PC-9 (cell line): ENCODE measurements at regions of chr22 and their contacts with region 1.

Region 1: GRCh38 chr22:39170825-39171622 is 18.5 kb upstream of the CBX7 start:
- DNase-seq: peak; percentile 53 to 91
- H3K4me3 ChIP-seq: no peak overlapping the region
- H3K27ac ChIP-seq: no peak overlapping the region
- H3K4me1 ChIP-seq: peaks cover 50% of the 10 kb centered on the region
- H3K27me3 ChIP-seq: no peaks in the 10 kb centered on the region
- CTCF ChIP-seq: peak; percentile 100

Region 2: DNA sequence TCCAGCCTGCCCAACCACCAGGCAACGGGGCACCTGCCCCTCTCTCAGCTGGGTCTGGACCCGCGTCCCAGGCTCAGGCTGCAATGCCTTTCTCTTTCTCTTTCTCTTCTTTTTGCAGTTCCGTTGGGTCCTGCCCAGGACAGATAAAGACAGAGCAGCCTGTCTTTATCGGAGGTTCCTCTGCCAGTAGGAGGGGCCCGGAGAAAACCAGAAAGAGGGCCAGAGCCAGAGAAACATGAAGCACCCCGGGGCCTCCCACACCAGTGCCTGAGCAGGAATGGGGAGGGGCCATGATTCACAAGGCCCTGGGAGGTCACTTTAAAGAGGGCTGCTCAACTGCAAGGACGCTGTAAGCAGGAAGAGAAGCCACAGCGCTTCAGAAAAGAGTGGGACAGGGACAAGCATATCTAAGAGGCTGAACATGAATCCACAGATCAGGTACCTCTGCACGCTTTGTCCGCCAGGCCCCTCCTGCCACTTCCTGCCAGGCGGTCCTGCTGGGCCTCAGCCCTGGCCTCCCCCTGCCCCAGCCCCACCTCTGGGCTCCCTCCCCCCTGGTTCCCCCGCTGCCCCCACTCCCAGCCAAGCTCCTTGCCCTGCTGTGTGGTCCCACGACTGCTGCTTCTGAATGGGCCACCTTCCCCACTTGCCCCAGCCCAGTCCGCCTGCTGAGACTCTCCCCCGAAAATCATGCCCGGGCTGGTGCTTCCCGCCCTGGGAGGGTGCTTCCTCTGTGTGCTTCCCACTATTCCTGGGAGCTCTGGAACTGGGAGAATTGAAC is 156.9 kb before region 1 on chr22 and contains the start of gene APOBEC3C:
- CTCF ChIA-PET with region 1: no interaction called
- POLR2A ChIA-PET with region 1: no interaction called
- intact Hi-C with region 1: no loop called
- DNase-seq: peak; percentile 89 to 92
- H3K4me3 ChIP-seq: peak within 1 kb of the TSS; percentile 77
- H3K27ac ChIP-seq: peak within 1 kb of the TSS; percentile 65
- H3K4me1 ChIP-seq: peaks cover 27% of the 10 kb centered on the region
- H3K27me3 ChIP-seq: no peaks in the 10 kb centered on the region
- CTCF ChIP-seq: peak; percentile 28; the same call in 1 of the 2 replicates
- total RNA-seq, gene APOBEC3C: 64.6 and 66.5 TPM in 2 replicates

Region 3: DNA sequence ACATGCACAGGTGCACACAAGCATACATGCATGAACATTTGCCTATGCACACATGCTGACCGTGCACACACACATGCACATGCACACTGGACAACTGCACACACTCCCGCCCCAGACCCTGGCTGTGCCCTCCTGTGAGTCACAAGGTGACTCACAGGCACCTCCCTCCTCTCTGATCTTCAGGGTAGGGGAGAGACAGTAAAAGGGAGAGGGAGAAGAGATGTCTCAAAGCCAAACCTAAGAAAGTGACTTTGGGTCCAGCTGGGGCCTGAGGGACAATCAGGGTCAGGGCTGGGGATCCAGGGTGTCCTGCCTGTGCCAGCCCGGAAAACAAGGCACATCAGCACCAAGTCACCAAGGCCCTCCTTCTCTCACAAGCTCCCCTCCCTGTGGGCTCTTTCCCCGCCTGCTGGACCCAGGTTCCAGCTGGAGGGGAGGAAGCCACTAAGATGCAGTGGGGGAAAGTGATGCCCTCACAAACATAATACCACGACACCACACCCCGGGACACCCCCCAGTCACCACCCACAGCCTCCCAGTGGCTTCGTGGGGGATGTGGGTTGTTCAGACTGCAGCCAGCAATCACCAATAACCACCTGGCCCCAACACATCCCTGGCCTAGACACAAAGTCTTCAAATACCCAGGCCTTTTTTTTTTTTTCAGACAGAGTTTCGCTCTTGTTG is 34.5 kb after region 1 on chr22:
- CTCF ChIA-PET with region 1: interaction called, 7 read pairs
- POLR2A ChIA-PET with region 1: interaction called, 6 read pairs
- intact Hi-C with region 1: loop called (anchors 1 kb)
- DNase-seq: peak; percentile 71 to 86
- H3K4me3 ChIP-seq: no peak overlapping the region
- H3K27ac ChIP-seq: peak overlapping the region; percentile 54
- H3K4me1 ChIP-seq: peaks cover 42% of the 10 kb centered on the region
- H3K27me3 ChIP-seq: no peaks in the 10 kb centered on the region
- CTCF ChIP-seq: no peak

Region 4: GRCh38 chr22:39236321-39237317 is 65.6 kb after region 1 on chr22:
- CTCF ChIA-PET with region 1: no interaction called
- POLR2A ChIA-PET with region 1: interaction called, 3 read pairs
- intact Hi-C with region 1: loop called (anchors 1 kb)
- DNase-seq: no peak
- H3K4me3 ChIP-seq: no peak overlapping the region
- H3K27ac ChIP-seq: no peak overlapping the region
- H3K4me1 ChIP-seq: peaks cover 49% of the 10 kb centered on the region
- H3K27me3 ChIP-seq: no peaks in the 10 kb centered on the region
- CTCF ChIP-seq: no peak

Region 5: DNA sequence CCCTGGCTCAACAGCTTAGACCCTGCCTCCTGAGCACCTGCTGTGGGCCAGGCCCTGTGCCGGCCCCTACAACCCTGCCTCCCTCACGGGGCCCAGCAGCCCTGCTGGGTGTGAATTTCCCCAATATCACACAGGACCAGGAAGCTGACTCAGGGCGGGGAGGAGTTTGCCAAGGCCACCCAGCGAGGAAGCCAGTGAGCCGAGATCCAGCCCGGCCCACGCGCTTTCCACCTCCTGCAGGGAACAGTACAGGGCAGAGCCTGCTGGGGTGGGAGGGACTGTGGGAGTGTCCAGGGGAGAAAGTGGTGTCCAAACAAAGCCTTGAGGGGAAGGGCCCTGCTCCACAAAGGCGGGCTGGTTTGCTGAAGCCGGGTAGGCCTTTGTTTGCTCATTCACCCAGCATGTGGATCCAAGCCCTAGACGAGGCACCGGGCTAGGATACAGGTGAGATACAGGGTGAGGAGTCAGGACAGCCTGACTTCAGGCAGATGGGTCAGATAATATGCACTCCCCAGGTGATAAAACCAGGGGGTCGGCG is 121.6 kb after region 1 on chr22:
- CTCF ChIA-PET with region 1: interaction called, 6 read pairs
- POLR2A ChIA-PET with region 1: interaction called, 10 read pairs
- intact Hi-C with region 1: loop called (anchors 1 kb)
- DNase-seq: peak; percentile 96 to 97
- H3K4me3 ChIP-seq: no peak overlapping the region
- H3K27ac ChIP-seq: peak overlapping the region; percentile 84
- H3K4me1 ChIP-seq: peaks cover 76% of the 10 kb centered on the region
- H3K27me3 ChIP-seq: no peaks in the 10 kb centered on the region
- CTCF ChIP-seq: no peak